ENCODE measurements at regions of chr16 and their contacts with region 1.

Region 1: GRCh38 chr16:72501739-72502593 is 330.0 kb upstream of the PMFBP1 start:
- DNase-seq: peak in 1 of 2 donors; percentile 73
- H3K4me3 ChIP-seq: no peak overlapping the region
- H3K27ac ChIP-seq: no peak overlapping the region
- H3K4me1 ChIP-seq: no peaks in the 10 kb centered on the region
- H3K27me3 ChIP-seq: no peaks in the 10 kb centered on the region
- CTCF ChIP-seq: peak; percentile 60 to 79 (median 72)

Region 2: GRCh38 chr16:72349719-72350118 is 152.2 kb before region 1 on chr16:
- intact Hi-C with region 1: no loop called
- DNase-seq: no peak
- H3K4me3 ChIP-seq: no peak overlapping the region
- H3K27ac ChIP-seq: no peak overlapping the region
- H3K4me1 ChIP-seq: no peaks in the 10 kb centered on the region
- H3K27me3 ChIP-seq: no peaks in the 10 kb centered on the region
- CTCF ChIP-seq: no peak

Region 3: GRCh38 chr16:73047518-73048291 is 545.7 kb after region 1 on chr16 and contains the start of gene ZFHX3:
- intact Hi-C with region 1: loop called (anchors 10 kb)
- DNase-seq: peak in 1 of 2 donors; percentile 91
- H3K4me3 ChIP-seq: peak within 1 kb of the TSS; percentile 88 to 89
- H3K27ac ChIP-seq: peak within 1 kb of the TSS; percentile 98 to 99
- H3K4me1 ChIP-seq: peaks cover 11 to 71% of the 10 kb centered on the region in 2 donors
- H3K27me3 ChIP-seq: no peaks in the 10 kb centered on the region
- CTCF ChIP-seq: peak in 1 of 3 experiments; percentile 28
- total RNA-seq, gene ZFHX3: 34.8 TPM

Region 4: DNA sequence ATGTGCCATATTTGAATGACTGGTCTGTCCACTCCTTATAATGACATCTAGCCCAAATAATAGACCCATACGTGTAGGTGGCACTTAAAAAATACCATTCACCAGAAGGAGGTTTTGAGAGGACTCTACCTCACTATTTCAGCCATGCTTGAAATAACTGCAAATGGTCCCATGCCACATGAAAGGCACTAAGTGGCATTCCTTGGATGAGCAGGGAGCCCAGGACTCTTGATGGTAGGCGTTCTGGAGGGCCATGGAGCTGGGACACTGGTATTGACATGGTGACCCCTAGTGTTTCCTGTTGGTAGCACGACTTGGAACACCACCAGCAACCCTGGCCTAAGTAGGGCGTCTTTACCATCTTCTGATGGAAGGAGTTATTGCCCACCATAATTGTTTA is 694.7 kb after region 1 on chr16:
- intact Hi-C with region 1: loop called (anchors 5 kb)
- DNase-seq: peak in 1 of 2 donors; percentile 84
- H3K4me3 ChIP-seq: no peak overlapping the region
- H3K27ac ChIP-seq: no peak overlapping the region
- H3K4me1 ChIP-seq: no peaks in the 10 kb centered on the region
- H3K27me3 ChIP-seq: no peaks in the 10 kb centered on the region
- CTCF ChIP-seq: peak; percentile 52 to 74 (median 61)

Region 5: GRCh38 chr16:73878611-73879010 is 1376.6 kb after region 1 on chr16:
- intact Hi-C with region 1: loop called (anchors 5 kb)
- DNase-seq: no peak
- H3K4me3 ChIP-seq: no peak overlapping the region
- H3K27ac ChIP-seq: no peak overlapping the region
- H3K4me1 ChIP-seq: no peaks in the 10 kb centered on the region
- H3K27me3 ChIP-seq: no peaks in the 10 kb centered on the region
- CTCF ChIP-seq: peak; percentile 56 to 74 (median 69)

Region 6: GRCh38 chr16:73956587-73957494 is 1454.9 kb after region 1 on chr16:
- intact Hi-C with region 1: loop called (anchors 10 kb)
- DNase-seq: no peak
- H3K4me3 ChIP-seq: no peak overlapping the region
- H3K27ac ChIP-seq: no peak overlapping the region
- H3K4me1 ChIP-seq: no peaks in the 10 kb centered on the region
- H3K27me3 ChIP-seq: no peaks in the 10 kb centered on the region
- CTCF ChIP-seq: peak; percentile 31 to 80 (median 79)

Measured in ascending aorta (tissue), 2 donors.